ENCODE measurements at regions of chr7 and their contacts with region 1.

Region 1: GRCh38 chr7:99918959-99919813 is at the start of gene TRIM4:
- DNase-seq: peak; percentile 79 to 96
- H3K4me3 ChIP-seq: peak within 1 kb of the TSS; percentile 87 to 94
- H3K27ac ChIP-seq: peak within 1 kb of the TSS; percentile 93 to 96
- H3K4me1 ChIP-seq: peaks cover 19 to 26% of the 10 kb centered on the region in 2 donors
- H3K27me3 ChIP-seq: no peaks in the 10 kb centered on the region
- CTCF ChIP-seq: peak in 2 of 3 experiments; percentile 28 to 40
- total RNA-seq, gene TRIM4: 12.7 TPM

Region 2: DNA sequence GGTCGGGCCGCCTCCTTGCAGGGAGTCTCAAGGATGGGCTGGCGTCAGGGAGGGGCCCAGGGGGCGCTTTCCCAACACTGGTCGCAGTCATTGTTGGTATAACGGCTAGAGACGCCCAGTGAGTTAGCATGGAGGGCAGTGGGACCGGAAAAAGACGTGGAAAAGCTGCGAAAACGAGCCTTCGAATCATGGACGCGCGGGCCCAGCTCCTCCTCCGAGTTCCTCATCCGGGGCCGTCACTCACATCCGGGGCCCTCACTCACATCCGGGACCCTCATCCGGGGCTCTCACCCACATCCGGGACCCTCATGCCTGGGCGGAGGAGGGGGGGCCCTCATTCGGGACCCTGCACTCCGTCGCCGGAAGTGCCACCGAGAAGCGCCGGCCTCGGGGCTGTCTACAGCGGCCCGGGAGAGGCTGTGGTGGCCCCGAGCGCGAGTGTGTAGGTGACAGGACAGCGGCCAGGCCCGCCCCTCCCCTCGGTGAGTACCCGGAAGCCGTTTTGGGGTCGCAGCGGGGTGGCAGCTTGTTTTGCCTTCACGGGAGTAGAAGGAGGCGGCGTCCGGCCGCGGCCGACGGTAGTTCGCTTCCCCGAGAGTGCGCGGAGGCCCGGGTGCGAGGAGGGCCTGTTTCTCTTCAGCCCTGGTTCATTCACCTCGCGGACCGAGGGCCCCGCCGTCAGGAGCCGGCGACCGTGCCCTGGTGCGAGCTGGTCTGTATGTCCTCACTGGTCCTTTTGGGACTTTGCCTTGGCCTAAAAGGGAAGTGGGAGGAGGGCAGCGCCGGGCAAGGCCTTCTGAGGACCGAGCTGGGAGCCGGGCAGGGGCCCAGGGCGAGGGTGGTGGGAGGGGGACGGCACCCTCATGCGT is 360.6 kb before region 1 on chr7 and contains the start of gene ZNF655:
- intact Hi-C with region 1: loop called (anchors 5 kb)
- DNase-seq: peak; percentile 75 to 97
- H3K4me3 ChIP-seq: peak within 1 kb of the TSS; percentile 62 to 85
- H3K27ac ChIP-seq: peak within 1 kb of the TSS; percentile 96 to 98
- H3K4me1 ChIP-seq: peaks cover 3 to 15% of the 10 kb centered on the region in 2 donors
- H3K27me3 ChIP-seq: no peaks in the 10 kb centered on the region
- CTCF ChIP-seq: no peak
- total RNA-seq, gene ZNF655: 37.9 TPM

Region 3: DNA sequence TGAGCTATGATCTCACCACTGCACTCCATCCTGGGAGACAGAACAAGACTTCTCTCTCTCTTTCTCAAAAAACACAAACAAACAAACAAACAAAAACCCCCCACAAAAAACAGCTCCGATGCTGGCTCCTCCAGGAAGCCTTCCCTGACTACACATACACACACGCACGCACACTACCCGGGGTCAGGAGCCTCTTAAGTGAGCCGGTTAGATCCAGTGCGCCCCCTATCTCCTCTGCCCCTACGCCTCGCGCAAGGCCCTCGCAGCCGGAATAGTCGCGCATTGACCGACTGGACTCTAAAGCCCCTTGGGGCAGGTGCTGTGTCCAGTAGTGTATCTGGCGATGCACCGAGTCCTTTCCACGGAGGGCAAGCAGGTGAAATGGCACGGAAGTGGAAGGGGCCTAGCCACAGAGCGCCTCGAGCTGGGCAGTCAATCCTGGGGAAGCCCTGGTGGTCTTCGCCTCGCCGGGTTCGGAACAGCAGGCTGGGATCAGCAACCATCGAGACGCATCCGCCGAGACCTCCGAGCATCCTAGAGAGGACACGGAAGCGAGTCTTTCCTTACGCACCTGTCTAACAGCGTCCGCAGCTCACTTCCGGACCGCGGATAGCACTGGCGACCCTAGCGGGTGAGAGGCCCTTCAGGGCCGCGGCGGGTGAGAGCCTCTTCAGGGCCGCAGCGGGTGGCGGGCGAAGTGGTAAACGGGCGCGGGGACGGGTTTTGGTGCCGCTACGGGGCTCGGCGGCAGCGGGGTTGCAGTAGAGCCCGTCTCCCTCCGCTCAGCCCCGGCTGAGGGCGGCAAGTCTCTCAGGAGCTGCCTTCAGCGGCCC is 302.6 kb before region 1 on chr7 and contains the start of gene ZSCAN25:
- intact Hi-C with region 1: loop called (anchors 2 kb)
- DNase-seq: peak; percentile 46 to 91
- H3K4me3 ChIP-seq: peak within 1 kb of the TSS; percentile 94 to 95
- H3K27ac ChIP-seq: peak within 1 kb of the TSS; percentile 87 to 88
- H3K4me1 ChIP-seq: peaks cover 0 to 6% of the 10 kb centered on the region in 2 donors
- H3K27me3 ChIP-seq: no peaks in the 10 kb centered on the region
- CTCF ChIP-seq: peak in 2 of 3 experiments; percentile 29 to 31
- total RNA-seq, gene ZSCAN25: 10.3 TPM

Region 4: GRCh38 chr7:99860281-99861127 is 58.7 kb before region 1 on chr7:
- intact Hi-C with region 1: loop called (anchors 2 kb)
- DNase-seq: peak; percentile 36 to 93
- H3K4me3 ChIP-seq: peak overlapping the region in 1 of 2 donors; percentile 20
- H3K27ac ChIP-seq: peak overlapping the region; percentile 82 to 96
- H3K4me1 ChIP-seq: peaks cover 0 to 28% of the 10 kb centered on the region in 2 donors
- H3K27me3 ChIP-seq: no peaks in the 10 kb centered on the region
- CTCF ChIP-seq: no peak

Region 5: GRCh38 chr7:101244375-101245146 is 1325.4 kb after region 1 on chr7 and contains the start of gene FIS1:
- intact Hi-C with region 1: loop called (anchors 10 kb)
- DNase-seq: peak; percentile 76 to 95
- H3K4me3 ChIP-seq: peak within 1 kb of the TSS; percentile 77 to 94
- H3K27ac ChIP-seq: peak within 1 kb of the TSS; percentile 95 to 97
- H3K4me1 ChIP-seq: peaks cover 0 to 14% of the 10 kb centered on the region in 2 donors
- H3K27me3 ChIP-seq: no peaks in the 10 kb centered on the region
- CTCF ChIP-seq: peak; percentile 92 to 95 (median 95)
- total RNA-seq, gene FIS1: 266 TPM